Cardiac septum (tissue), 1 donor: ENCODE measurements at regions of chr1 and their contacts with region 1.

Region 1: GRCh38 chr1:67685067-67685557 is at the start of gene GADD45A:
- DNase-seq: peak; percentile 100
- total RNA-seq, gene GADD45A: 94.9 TPM

Region 2: DNA sequence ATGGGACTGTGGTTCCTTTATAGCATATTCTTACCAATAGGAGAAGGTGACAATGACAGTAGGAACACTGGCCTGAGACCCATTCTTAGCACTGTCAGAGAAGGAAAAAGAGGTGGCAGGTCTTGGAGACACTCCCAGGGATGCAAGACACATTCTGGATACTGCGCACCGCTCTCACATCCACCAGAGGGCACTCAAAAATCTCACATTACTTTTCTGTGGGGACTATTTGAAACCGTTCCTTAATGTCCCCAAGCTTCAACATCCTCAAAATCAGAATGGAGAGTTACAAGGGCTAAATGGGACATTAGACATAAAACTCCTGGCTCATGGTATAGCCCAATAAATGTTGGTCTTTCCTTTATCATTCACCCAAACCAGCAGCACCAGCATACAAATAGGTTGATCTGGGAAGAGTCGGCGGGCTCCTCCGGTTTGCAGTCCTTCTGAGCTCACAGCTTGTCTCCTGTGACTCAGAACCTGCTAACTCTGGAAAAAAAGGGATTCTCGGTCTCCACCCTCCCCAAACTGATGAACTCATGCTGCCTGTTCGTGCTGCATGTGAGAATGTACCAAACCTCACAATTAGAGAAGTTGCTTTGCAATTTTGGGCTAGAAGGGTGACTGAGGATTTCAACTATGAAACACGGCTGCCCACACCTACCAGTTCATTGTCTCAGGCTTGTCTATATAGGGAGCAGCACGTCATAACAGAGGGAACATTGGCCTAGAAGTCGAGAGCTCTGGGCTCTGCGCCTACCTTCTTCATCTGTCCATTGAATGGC is 337.2 kb before region 1 on chr1:
- intact Hi-C with region 1: no loop called
- DNase-seq: no peak

Region 3: GRCh38 chr1:67535474-67535873 is 149.6 kb before region 1 on chr1:
- intact Hi-C with region 1: loop called (anchors 10 kb)
- DNase-seq: peak; percentile 84

Region 4: GRCh38 chr1:67586596-67586995 is 98.5 kb before region 1 on chr1:
- intact Hi-C with region 1: loop called (anchors 5 kb)
- DNase-seq: no peak

Region 5: GRCh38 chr1:67636146-67636545 is 49.0 kb before region 1 on chr1:
- intact Hi-C with region 1: no loop called
- DNase-seq: no peak

Region 6: DNA sequence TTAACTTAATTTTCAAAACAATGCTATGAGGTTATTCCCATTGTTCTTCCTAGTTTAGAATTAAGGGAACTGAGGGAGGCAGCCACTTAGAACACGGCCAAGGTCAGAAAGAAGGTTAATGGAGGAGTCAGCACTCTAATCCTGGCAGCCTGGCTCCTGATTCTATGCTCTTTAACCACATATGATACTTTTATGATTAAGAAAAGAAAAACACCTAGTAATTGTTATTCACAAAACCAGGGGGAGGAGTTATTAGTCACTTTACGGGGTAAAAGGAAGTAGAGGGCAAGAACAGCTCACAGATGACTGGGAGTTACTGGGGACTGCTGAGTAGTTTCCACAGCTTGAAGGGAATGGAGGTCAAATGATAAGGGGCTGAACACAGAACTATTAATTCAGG is 38.5 kb after region 1 on chr1:
- intact Hi-C with region 1: loop called (anchors 1 kb)
- DNase-seq: no peak

Region 7: DNA sequence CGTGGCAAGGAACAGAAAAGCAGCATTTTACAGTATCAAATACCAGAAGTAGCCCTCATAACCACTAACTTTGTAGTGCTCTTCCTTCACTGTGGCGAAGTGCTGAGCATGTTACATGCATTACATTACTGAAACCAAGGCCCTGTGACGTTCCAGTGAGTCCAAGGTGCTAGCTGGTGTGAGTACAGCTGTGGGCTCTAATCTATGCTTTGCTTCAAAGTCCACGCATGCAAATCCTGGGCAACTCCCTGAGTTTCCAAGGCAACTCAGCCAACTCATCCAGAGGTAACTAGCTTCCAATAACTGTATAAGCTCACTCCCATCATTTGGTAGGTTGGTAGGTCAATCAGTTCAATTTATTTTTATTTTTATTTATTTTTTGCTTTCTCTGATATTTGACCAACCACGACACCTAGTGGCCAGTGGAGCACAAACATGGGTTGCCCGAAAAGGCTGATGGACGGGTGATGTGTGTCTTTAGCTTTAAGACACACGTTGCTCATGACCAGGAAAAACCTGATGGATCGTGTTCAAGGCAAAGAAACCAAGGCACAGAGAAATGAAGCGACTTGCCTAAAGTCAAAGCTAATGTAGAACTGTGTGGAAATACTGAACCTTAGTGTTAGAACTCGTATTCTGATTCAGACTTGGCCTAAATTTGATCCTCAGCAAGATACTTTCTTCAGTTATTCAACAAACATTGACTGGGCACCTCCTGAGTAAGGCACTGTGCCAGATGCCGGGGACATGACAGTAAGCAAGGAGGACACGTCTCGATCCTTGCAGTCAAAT is 75.1 kb after region 1 on chr1:
- intact Hi-C with region 1: loop called (anchors 2 kb)
- DNase-seq: no peak